Left cardiac atrium (tissue), 4 donors: ENCODE measurements at regions of chr18 and their contacts with region 1.

Region 1: DNA sequence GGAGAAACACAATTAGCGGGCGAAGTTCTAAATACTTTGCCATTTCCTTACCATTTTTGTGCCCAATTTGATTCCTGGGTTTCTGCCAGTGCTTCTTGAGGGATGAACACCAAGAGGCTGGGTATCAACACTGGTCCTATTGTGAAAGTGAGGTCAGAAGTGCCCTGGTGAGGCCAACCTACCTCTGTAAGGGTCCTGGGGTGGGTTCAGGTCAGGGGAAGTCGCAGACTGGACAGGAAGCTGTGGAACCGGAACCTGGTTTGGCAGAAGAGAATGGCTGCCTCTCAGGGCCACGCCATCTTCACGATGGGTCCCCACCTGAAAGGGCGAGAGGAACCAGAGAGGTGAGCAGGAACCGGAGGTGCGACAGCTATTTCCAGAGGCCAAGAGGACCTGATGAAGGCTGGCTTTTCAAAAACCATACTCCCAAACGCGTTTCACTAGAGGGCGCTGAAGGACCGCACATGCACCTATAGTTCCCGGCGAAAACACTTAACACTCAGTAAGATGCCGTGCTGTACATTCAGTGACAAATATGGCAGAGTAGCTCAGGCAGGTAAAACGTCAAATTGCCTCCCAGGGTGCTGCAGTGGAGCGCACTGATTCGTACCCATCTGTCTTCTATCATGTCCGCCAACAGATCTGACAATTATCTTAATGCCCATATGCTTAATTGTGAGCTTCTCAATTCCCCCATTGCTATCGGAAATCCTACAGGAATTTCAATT is 275.3 kb upstream of the CCDC68 start:
- DNase-seq: peak; percentile 83
- ATAC-seq: peak; percentile 91 to 93

Region 2: GRCh38 chr18:55781481-55781957 is 547.0 kb after region 1 on chr18:
- intact Hi-C with region 1: loop called in 1 of 2 experiments (anchors 2 kb)
- DNase-seq: peak; percentile 52
- ATAC-seq: peak; percentile 39 to 54